GM10248 (cell line): ENCODE measurements at regions of chr19 and their contacts with region 1.

Region 1: DNA sequence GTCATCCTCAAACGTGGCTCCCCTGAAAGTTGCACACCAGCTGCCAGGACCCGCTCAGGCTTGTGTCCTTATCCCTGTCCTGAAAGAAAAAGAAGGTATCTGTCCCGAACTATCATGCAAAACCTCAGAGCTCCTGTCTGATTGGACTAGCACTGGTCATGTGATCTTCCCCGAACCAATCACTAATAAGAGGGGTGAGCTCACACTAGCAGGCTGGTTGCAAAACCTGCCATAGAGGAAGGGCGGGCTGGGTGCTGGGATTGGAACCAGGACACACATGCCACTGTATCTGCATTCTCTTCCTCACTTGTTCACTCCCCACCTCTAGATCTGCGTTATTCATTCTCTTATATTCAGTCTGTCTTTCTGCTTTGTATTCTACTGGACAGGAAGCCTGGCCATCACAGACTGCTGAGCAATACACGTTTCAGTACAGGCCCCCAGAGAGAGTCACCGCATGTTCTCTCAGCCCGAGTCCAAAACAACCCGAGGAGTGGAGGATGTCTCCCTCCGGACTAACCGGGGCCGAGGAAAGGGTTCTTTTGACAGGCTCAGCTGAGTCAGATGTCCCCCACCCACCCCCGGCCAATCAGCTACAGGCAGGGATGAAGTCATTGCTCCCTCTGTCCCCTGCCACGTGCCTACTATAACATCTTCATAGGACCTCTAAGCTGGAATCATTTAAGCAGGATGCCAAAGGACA is 97.7 kb downstream of the SIPA1L3 start:
- DNase-seq: peak; percentile 81
- CTCF ChIP-seq: no peak

Region 2: GRCh38 chr19:37987356-37988332 is 17.0 kb before region 1 on chr19:
- CTCF ChIA-PET with region 1: interaction called, 13 read pairs
- POLR2A ChIA-PET with region 1: interaction called, 6 read pairs
- DNase-seq: no peak
- CTCF ChIP-seq: no peak

Region 3: DNA sequence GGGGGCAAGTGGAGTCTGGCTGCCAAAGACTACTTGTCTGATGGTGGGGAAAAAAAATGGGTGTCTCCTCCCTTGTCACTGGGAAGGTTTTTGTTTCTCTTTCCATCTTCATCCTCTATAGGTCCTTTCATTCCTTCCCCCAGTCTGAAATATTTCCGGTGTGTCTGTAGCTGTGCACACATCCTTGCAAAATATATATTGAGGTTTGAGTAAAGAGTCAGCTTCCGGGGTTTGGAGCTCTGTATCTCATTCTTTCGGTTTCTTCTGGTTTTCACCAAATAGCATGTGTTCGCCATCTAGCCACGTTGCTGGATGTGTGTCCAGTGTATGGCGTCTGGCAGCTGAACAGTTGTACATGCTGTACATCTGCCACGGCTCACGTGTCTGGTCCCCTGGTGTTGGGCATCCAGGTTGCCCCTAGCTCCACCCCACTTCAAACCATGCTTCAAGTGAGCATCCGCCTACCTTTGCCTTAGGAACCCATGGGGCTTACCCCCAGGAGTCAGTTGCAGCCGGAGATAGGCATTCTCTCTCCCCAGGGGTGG is 44.5 kb after region 1 on chr19:
- CTCF ChIA-PET with region 1: interaction called, 13 read pairs
- POLR2A ChIA-PET with region 1: interaction called, 4 read pairs
- DNase-seq: peak; percentile 76
- CTCF ChIP-seq: no peak